PC-3 (cell line): ENCODE measurements at regions of chr19 and their contacts with region 1.

Region 1: DNA sequence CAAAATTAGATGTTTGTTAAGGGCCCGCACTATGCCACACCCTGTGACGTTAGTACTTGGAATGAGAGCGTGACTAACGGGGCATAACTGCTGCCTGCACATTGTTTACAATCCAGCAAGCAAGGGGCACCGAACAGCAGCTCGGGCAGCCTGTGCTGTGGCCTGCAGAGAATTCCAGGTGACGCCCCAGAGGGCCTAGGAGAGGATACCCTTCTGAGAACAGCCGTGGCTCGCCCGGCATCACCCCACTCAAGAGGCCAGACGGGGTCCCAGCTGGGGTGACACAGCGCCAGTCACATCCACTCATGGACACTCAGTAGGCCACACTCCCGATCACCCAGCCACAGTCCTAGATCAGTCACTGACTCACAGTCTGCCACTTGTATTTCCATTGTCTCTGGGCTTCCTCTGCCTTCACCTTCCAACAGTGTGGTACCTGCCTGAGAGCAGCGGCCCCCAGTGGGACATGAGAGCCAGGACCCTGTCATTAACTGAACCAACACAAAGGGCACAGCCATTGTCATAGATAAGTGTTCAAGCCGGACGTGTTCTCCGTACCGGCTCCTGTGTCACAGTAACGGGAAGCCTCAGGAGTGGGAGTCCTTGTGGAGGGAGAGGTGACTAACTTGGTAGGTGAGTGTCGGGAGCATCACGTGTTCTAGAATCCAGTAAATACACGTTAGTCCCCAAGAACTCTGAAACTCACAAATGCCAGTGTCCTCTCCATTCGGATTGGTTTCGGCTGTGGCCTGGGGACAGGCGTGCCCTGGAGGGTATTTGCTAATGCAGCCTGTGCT is 7.5 kb downstream of the ZNF331 start:
- DNase-seq: peak; percentile 98
- ATAC-seq: peak; percentile 96
- H3K4me3 ChIP-seq: peak overlapping the region; percentile 26; the same call in 1 of the 2 replicates
- H3K27ac ChIP-seq: peak overlapping the region; percentile 96
- H3K4me1 ChIP-seq: peaks cover 44% of the 10 kb centered on the region
- H3K27me3 ChIP-seq: no peaks in the 10 kb centered on the region
- CTCF ChIP-seq: peak; percentile 53

Region 2: GRCh38 chr19:53467485-53468262 is 77.8 kb before region 1 on chr19 and contains the start of gene ZNF813:
- CTCF ChIA-PET with region 1: no interaction called
- POLR2A ChIA-PET with region 1: no interaction called
- intact Hi-C with region 1: loop called (anchors 1 kb)
- DNase-seq: peak; percentile 88
- ATAC-seq: peak; percentile 93
- H3K4me3 ChIP-seq: peak within 1 kb of the TSS; percentile 88
- H3K27ac ChIP-seq: peak within 1 kb of the TSS; percentile 28; the same call in 1 of the 2 replicates
- H3K4me1 ChIP-seq: no peaks in the 10 kb centered on the region
- H3K27me3 ChIP-seq: no peaks in the 10 kb centered on the region
- CTCF ChIP-seq: no peak
- total RNA-seq, gene ZNF813: 3.5 and 4.4 TPM in 2 replicates

Region 3: DNA sequence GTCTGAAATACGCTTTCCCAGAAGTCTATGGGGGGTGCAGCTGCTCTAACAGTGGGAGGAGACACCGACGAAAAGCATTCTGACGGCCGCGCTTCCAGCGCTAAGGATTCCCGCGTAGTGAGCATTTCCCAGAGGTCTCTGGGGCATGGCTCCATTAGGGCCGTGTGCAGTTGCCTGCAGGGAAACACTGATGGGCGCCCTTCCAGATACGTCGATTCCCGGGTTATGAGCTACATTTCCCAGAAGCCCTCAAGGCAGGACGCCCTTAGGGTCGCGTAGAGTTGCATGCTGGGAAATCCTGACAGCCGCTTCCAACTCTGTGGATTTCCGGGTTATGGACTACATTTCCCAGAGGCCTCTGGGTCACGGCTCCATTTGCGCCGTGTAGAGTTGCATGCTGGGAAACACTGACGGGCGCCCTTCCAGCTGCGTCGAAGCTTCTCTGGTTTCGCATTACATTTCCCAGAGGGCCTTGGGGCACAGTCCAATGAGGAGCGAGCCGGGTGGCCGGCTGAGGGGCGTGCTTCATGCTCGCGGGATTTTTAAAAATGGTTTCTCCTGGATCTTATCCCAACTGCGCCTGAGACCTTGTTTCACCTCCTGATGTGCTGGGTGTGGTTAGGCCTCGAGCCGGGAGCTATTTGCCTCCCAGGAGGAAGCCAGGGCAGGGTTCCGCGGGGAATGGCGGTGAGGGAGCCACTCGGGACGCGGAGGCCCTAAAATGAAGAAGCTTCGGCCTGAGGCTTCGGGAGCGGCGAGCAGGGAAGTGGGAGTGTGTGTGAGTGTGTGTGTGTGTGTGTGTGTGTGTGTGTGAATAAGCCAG is 24.7 kb before region 1 on chr19:
- CTCF ChIA-PET with region 1: no interaction called
- POLR2A ChIA-PET with region 1: no interaction called
- intact Hi-C with region 1: loop called (anchors 2 kb)
- DNase-seq: peak; percentile 99
- ATAC-seq: peak; percentile 99
- H3K4me3 ChIP-seq: peak overlapping the region; percentile 91
- H3K27ac ChIP-seq: peak overlapping the region; percentile 34; the same call in 1 of the 2 replicates
- H3K4me1 ChIP-seq: peaks cover 5% of the 10 kb centered on the region; the same call in 1 of the 2 replicates
- H3K27me3 ChIP-seq: no peaks in the 10 kb centered on the region
- CTCF ChIP-seq: no peak